ENCODE measurements at regions of chr3 and their contacts with region 1.

Region 1: DNA sequence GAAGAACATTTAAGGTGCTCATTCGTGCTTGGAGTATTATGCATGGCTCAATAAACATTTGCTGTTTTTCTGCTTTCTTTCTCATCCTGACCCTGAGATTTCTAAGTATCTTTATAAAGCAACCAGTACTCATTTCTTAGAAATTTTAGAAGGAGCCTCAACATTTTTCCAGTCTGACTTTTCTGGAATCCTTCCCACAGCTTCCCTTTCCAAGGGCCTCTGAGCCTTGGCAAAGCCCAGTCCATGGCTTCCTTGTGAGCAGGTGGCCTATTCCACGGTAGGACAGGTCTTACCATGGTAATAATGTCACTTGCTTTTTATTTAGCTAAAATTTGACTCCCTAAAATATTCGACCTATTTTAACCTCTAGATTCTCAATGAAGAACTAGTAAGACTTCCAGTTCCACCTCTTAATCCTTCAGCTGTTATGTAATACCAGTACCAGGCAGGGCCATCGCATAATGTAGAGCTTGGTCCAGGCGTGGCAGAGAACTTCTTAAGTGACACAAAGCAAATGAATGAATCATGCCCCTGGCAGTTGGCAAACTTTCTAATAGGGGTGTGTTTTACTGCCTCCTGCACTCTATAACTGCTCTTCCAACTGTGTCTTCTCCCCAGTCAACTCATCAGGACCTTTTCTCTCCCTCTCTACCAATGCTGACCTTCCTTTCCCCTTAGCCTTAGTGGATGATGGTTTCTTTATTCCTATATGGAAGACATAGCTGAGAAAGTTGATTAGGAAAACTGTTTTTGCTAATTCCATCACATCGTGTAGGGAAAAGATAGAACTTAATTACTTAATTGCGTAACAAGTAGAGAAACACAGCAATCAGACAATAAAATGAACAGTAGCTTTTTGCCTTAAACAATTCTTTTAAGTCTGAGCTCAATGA is 894 bp upstream of the TM4SF4 start:
- DNase-seq: no peak
- ATAC-seq: no peak
- H3K4me3 ChIP-seq: no peak overlapping the region
- H3K27ac ChIP-seq: peak overlapping the region; percentile 40
- H3K4me1 ChIP-seq: peaks cover 37% of the 10 kb centered on the region
- H3K27me3 ChIP-seq: no peaks in the 10 kb centered on the region
- CTCF ChIP-seq: no peak
- EP300 ChIP-seq: no peak
- POLR2A ChIP-seq: no peak
- RAD21 ChIP-seq: no peak

Region 2: GRCh38 chr3:149384911-149385321 is 88.7 kb before region 1 on chr3:
- CTCF ChIA-PET with region 1: no interaction called
- POLR2A ChIA-PET with region 1: interaction called, 24 read pairs
- in situ Hi-C with region 1: no loop called
- intact Hi-C with region 1: no loop called
- DNase-seq: peak; percentile 78
- ATAC-seq: peak; percentile 23
- H3K4me3 ChIP-seq: peak overlapping the region; percentile 42 to 69 (median 66)
- H3K27ac ChIP-seq: peak overlapping the region; percentile 100
- H3K4me1 ChIP-seq: peaks cover 84% of the 10 kb centered on the region
- H3K27me3 ChIP-seq: no peaks in the 10 kb centered on the region; a peak in 1 of 5 replicates
- CTCF ChIP-seq: no peak
- EP300 ChIP-seq: peak in 1 of 2 experiments; percentile 39; a peak in 1 of 4 replicates
- POLR2A ChIP-seq: peak; percentile 63 to 71
- RAD21 ChIP-seq: no peak

Region 3: GRCh38 chr3:149442851-149443544 is 30.6 kb before region 1 on chr3:
- CTCF ChIA-PET with region 1: no interaction called
- POLR2A ChIA-PET with region 1: no interaction called
- in situ Hi-C with region 1: no loop called
- intact Hi-C with region 1: loop called (anchors 1 kb)
- DNase-seq: no peak
- ATAC-seq: no peak
- H3K4me3 ChIP-seq: no peak overlapping the region
- H3K27ac ChIP-seq: no peak overlapping the region
- H3K4me1 ChIP-seq: peaks cover 16% of the 10 kb centered on the region
- H3K27me3 ChIP-seq: no peaks in the 10 kb centered on the region
- CTCF ChIP-seq: no peak
- EP300 ChIP-seq: no peak
- POLR2A ChIP-seq: no peak
- RAD21 ChIP-seq: no peak